ENCODE measurements at regions of chr5 and their contacts with region 1.

Region 1: GRCh38 chr5:139273572-139274289 is 19.8 kb upstream of the MATR3 start:
- DNase-seq: peak; percentile 93
- CTCF ChIP-seq: no peak

Region 2: DNA sequence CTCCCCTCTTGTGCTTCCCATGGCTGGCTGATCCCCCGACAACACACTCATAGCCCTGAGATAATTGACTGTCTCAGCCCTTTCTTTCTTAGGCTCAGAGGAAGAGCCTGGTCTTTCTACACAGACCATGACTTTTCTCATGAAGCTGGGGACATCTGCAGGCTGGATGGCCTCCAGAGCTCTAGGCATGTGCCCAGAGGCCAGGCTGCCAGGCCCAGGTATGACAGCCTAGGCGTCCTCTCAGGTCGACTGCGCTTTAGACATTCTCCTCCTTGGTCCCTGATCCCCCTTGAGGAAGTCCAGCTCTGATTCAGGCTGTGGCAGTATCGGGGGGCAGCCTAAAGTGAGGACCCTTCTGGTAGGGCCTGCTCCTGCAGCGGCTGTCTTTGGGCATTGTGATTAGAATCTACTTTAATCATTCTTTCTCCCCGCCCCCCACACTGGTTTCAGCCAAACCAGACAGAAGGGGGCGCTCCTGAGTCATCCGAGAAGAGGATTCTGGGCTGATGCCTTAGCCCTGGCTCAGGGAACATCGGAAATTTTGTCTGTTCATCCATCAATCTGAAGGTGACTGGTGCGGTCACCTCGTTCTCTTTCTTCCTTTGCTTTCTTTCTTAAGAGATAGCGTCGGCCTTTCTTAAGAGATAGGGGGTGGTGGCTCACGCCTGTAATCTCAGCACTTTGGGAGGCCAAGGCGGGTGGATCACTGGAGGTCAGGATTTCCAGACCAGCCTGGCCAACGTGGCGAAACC is 632.0 kb before region 1 on chr5:
- in situ Hi-C with region 1: loop called (anchors 25 kb)
- DNase-seq: peak; percentile 64
- CTCF ChIP-seq: peak; percentile 82

Region 3: GRCh38 chr5:138824924-138825863 is 448.5 kb before region 1 on chr5:
- in situ Hi-C with region 1: loop called (anchors 25 kb)
- DNase-seq: peak; percentile 56
- CTCF ChIP-seq: peak; percentile 55

Region 4: DNA sequence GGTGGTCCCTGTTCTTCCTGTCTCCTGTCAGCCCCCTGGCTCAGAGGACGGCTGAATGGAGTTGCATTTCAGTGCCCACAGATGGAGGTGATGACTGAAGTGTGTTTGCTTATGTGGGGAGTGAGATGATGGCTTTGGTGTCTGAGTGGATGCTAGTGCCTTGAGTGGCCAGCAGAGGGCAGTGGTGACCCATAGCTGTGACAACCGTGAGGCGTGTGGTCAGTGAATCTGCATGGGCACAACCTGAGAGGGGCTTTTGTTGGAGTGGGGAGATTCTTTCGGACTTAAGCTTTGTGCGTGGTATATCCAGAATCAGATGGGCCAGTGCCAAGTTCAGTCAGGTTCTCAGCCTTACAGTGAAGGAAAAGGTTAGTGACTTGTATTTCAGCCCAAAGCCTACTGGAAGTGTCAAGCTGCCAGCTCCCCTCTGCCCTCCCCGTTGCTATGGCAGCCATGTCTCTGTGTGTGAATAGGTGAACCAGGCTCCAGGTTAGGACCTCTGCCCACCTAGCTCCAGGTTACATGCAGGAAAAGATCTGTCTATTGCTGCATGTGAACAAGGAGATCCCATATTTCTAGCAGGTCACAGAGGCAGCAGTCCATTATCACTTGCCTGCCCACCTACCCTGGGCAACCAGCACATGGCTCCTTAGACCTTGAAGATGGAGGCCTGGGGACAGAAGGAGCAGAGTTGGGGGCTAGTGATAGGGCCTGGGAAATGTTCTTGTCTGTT is 359.7 kb after region 1 on chr5:
- in situ Hi-C with region 1: no loop called
- DNase-seq: peak; percentile 76
- CTCF ChIP-seq: peak; percentile 97

Region 5: DNA sequence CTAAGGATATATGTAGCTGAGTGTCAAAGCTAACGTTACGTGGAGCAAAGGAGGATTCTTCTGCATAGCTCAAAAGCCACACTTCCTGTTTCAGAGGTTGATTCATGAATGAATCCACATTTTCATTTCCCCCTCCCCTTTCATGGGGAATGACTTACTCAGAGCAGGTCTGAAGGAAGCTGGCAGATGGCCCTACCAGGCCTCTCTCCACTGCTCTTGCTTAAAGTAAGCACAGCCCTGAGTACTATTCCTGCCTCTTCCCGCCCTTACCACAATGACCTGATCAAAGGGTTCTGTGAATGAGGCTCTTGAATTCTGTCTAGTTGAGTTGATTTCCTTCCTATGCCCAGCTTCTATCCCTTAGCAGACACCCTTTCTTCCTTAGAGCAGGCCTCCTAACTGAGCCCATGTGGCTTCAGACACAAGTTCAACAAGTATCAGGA is 858.3 kb after region 1 on chr5:
- in situ Hi-C with region 1: no loop called
- DNase-seq: no peak
- CTCF ChIP-seq: no peak

Measured in GM13977 (cell line).